Heart right ventricle (tissue), 16 donors: ENCODE measurements at regions of chr2 and their contacts with region 1.

Region 1: DNA sequence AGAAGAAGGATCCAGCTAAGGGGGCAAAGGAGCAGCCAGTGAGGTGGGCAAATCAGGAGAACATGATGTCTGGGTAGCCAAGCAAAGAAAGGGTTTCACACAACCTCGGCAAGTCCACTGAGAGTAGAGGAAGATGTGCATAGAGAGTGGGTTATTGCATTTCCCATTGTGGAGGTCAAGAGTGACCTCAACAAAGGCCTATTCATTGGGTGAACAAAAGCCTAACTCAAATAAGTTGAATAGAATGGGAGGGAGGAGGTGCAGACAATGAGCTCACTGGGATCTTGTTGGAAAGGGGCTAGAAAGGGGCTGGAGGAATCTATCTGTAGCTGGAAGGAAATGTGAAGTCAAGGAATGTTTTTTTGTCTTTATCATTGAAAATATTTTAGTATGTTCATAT is 14.0 kb upstream of the PDCL3 start:
- DNase-seq: no peak
- ATAC-seq: no peak
- H3K4me3 ChIP-seq: no peak overlapping the region
- H3K27ac ChIP-seq: no peak overlapping the region
- H3K4me1 ChIP-seq: no peaks in the 10 kb centered on the region
- H3K27me3 ChIP-seq: peaks cover 0 to 5% (median 0%) of the 10 kb centered on the region in 7 donors
- CTCF ChIP-seq: no peak

Region 2: GRCh38 chr2:100446696-100447095 is 102.1 kb before region 1 on chr2:
- intact Hi-C with region 1: loop called in 1 of 10 experiments (anchors 10 kb)
- DNase-seq: no peak
- ATAC-seq: no peak
- H3K4me3 ChIP-seq: no peak overlapping the region
- H3K27ac ChIP-seq: no peak overlapping the region
- H3K4me1 ChIP-seq: no peaks in the 10 kb centered on the region
- H3K27me3 ChIP-seq: peaks cover 0 to 5% (median 0%) of the 10 kb centered on the region in 7 donors
- CTCF ChIP-seq: no peak

Region 3: DNA sequence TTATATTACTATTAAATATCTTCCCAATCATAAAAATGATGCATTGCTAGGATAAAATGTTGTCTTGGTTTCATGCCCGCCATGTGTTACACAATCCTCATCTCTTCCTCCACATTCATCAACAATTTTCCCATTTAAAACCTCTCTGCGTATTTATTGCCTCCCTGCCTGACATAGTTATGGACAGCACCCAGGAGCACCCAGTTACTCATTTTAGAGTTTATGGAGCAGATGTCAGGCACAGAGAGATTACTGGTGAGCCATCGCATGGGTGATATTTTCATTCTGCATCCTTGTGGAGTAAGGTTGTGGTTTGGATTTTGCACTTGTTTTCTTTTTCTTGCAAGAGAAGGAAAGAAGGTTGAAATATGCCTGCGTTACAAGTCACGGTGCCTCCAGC is 154.4 kb after region 1 on chr2:
- intact Hi-C with region 1: no loop called
- DNase-seq: no peak
- ATAC-seq: no peak
- H3K4me3 ChIP-seq: no peak overlapping the region
- H3K27ac ChIP-seq: no peak overlapping the region
- H3K4me1 ChIP-seq: peaks cover 0 to 14% (median 0%) of the 10 kb centered on the region in 9 donors
- H3K27me3 ChIP-seq: no peaks in the 10 kb centered on the region
- CTCF ChIP-seq: no peak